A673 (cell line): ENCODE measurements at regions of chr12 and their contacts with region 1.

Region 1: GRCh38 chr12:58906917-58907316 is 13.4 kb downstream of the LRIG3 start:
- DNase-seq: no peak
- H3K4me3 ChIP-seq: no peak overlapping the region
- H3K27ac ChIP-seq: no peak overlapping the region
- H3K4me1 ChIP-seq: no peaks in the 10 kb centered on the region
- H3K27me3 ChIP-seq: no peaks in the 10 kb centered on the region
- CTCF ChIP-seq: no peak

Region 2: GRCh38 chr12:58557171-58557570 is 349.7 kb before region 1 on chr12:
- CTCF ChIA-PET with region 1: no interaction called
- POLR2A ChIA-PET with region 1: interaction called, 23 read pairs
- intact Hi-C with region 1: no loop called
- DNase-seq: no peak
- H3K4me3 ChIP-seq: no peak overlapping the region
- H3K27ac ChIP-seq: no peak overlapping the region
- H3K4me1 ChIP-seq: no peaks in the 10 kb centered on the region
- H3K27me3 ChIP-seq: no peaks in the 10 kb centered on the region
- CTCF ChIP-seq: no peak

Region 3: GRCh38 chr12:58765653-58766512 is 141.0 kb before region 1 on chr12:
- CTCF ChIA-PET with region 1: no interaction called
- POLR2A ChIA-PET with region 1: no interaction called
- intact Hi-C with region 1: no loop called
- DNase-seq: no peak
- H3K4me3 ChIP-seq: no peak overlapping the region
- H3K27ac ChIP-seq: no peak overlapping the region
- H3K4me1 ChIP-seq: no peaks in the 10 kb centered on the region
- H3K27me3 ChIP-seq: no peaks in the 10 kb centered on the region
- CTCF ChIP-seq: no peak

Region 4: GRCh38 chr12:58860056-58860787 is 46.7 kb before region 1 on chr12:
- CTCF ChIA-PET with region 1: no interaction called
- POLR2A ChIA-PET with region 1: no interaction called
- intact Hi-C with region 1: no loop called
- DNase-seq: no peak
- H3K4me3 ChIP-seq: no peak overlapping the region
- H3K27ac ChIP-seq: no peak overlapping the region
- H3K4me1 ChIP-seq: no peaks in the 10 kb centered on the region
- H3K27me3 ChIP-seq: no peaks in the 10 kb centered on the region
- CTCF ChIP-seq: no peak